Endothelial cell of umbilical vein (primary cell): ENCODE measurements at regions of chr12 and their contacts with region 1.

Region 1: GRCh38 chr12:121811434-121812319 is 7.9 kb downstream of the SETD1B start:
- DNase-seq: peak; percentile 67
- H3K4me3 ChIP-seq: peak overlapping the region in 2 of 3 experiments; percentile 49
- H3K27ac ChIP-seq: no peak overlapping the region
- H3K4me1 ChIP-seq: peaks cover 27% of the 10 kb centered on the region
- H3K27me3 ChIP-seq: no peaks in the 10 kb centered on the region
- CTCF ChIP-seq: peak; percentile 89 to 94
- POLR2A ChIP-seq: no peak

Region 2: GRCh38 chr12:121688966-121689365 is 122.7 kb before region 1 on chr12:
- CTCF ChIA-PET with region 1: interaction called, 11 read pairs
- POLR2A ChIA-PET with region 1: interaction called, 3 read pairs
- dilution Hi-C with region 1: no loop called
- intact Hi-C with region 1: no loop called
- DNase-seq: no peak
- H3K4me3 ChIP-seq: no peak overlapping the region
- H3K27ac ChIP-seq: no peak overlapping the region
- H3K4me1 ChIP-seq: no peaks in the 10 kb centered on the region
- H3K27me3 ChIP-seq: no peaks in the 10 kb centered on the region
- CTCF ChIP-seq: no peak
- POLR2A ChIP-seq: no peak

Region 3: DNA sequence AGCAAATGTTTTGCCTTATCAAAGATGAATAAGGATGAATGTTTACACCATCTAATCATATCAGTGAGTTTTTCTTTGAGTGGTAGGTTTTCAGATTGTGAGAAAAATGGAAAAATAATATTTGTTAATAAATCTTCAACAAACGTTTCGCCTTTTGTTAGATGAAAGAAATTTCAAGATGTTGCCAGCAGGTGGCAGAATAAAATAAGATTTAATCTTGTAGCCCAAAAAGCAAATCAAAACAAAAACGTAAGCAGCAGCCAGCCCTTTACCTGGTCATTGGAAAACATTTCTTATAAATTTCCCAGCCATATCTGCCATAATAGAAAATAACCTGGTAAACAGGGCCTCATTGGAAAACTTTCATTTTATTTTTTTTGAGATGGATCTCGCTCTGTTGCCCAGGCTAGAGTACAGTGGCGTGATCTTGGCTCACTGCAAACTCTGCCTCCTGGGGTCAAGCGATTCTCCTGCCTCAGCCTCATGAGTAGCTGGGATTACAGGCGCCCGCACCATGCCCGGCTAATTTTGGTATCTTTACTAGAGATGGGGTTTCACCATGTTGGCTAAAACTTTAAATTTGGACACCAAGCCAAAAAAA is 114.5 kb before region 1 on chr12:
- CTCF ChIA-PET with region 1: interaction called, 6 read pairs
- POLR2A ChIA-PET with region 1: no interaction called
- dilution Hi-C with region 1: no loop called
- intact Hi-C with region 1: loop called (anchors 1 kb)
- DNase-seq: peak; percentile 62
- H3K4me3 ChIP-seq: no peak overlapping the region
- H3K27ac ChIP-seq: no peak overlapping the region
- H3K4me1 ChIP-seq: no peaks in the 10 kb centered on the region
- H3K27me3 ChIP-seq: peaks cover under 1 to 3% of the 10 kb centered on the region in 2 experiments
- CTCF ChIP-seq: peak in 1 of 2 donors; percentile 19
- POLR2A ChIP-seq: no peak

Region 4: DNA sequence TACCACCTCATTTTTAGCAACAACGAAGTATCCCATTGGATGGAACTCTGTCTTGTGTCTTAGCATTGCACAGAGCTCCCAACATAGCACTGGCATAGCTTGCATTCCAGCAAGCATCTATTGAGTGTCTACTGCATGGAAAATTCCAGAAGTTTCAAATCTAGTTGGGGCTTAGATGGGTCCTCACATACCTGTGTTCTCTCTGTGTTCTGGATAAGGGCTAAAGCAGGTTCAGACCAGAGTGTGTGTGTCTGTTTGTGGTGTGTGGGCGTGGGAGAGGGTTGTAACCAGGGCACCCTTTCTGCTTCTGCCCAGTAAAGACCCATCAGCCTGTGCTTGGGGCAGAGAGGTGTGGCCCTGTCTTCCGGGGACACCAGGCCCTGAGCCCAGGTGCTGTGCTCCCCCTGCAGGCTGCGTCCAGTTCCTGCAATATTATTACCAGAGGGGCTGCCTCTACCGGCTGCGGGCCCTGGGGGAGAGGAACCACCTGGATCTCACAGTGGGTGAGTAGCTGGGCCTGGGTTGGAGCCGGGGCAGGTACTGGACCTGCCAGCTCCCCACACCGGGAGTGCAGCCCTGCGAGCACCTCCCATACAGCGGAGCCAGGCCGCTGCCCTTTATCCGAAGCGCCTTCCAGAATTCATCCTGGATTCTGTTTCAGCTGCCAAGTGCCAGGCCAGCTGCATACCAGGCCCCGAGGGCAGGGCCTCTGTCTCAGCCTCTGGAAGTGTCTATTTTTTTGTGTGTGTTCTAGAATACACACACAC is 38.5 kb before region 1 on chr12:
- CTCF ChIA-PET with region 1: interaction called, 28 read pairs
- POLR2A ChIA-PET with region 1: no interaction called
- dilution Hi-C with region 1: no loop called
- intact Hi-C with region 1: loop called (anchors 1 kb)
- DNase-seq: peak; percentile 40
- H3K4me3 ChIP-seq: no peak overlapping the region
- H3K27ac ChIP-seq: no peak overlapping the region
- H3K4me1 ChIP-seq: no peaks in the 10 kb centered on the region
- H3K27me3 ChIP-seq: no peaks in the 10 kb centered on the region
- CTCF ChIP-seq: peak; percentile 80
- POLR2A ChIP-seq: no peak

Region 5: GRCh38 chr12:121823101-121823726 is 11.5 kb after region 1 on chr12:
- CTCF ChIA-PET with region 1: interaction called, 16 read pairs
- POLR2A ChIA-PET with region 1: interaction called, 3 read pairs
- dilution Hi-C with region 1: no loop called
- intact Hi-C with region 1: no loop called
- DNase-seq: no peak
- H3K4me3 ChIP-seq: no peak overlapping the region
- H3K27ac ChIP-seq: no peak overlapping the region
- H3K4me1 ChIP-seq: no peaks in the 10 kb centered on the region
- H3K27me3 ChIP-seq: no peaks in the 10 kb centered on the region
- CTCF ChIP-seq: peak in 1 of 2 donors; percentile 3
- POLR2A ChIP-seq: no peak

Region 6: GRCh38 chr12:121830588-121831265 is 19.1 kb after region 1 on chr12:
- CTCF ChIA-PET with region 1: interaction called, 16 read pairs
- POLR2A ChIA-PET with region 1: interaction called, 3 read pairs
- dilution Hi-C with region 1: no loop called
- intact Hi-C with region 1: loop called (anchors 2 kb)
- DNase-seq: no peak
- H3K4me3 ChIP-seq: no peak overlapping the region
- H3K27ac ChIP-seq: no peak overlapping the region
- H3K4me1 ChIP-seq: no peaks in the 10 kb centered on the region
- H3K27me3 ChIP-seq: no peaks in the 10 kb centered on the region
- CTCF ChIP-seq: no peak
- POLR2A ChIP-seq: no peak

Region 7: GRCh38 chr12:121845701-121846100 is 34.0 kb after region 1 on chr12:
- CTCF ChIA-PET with region 1: no interaction called
- POLR2A ChIA-PET with region 1: no interaction called
- dilution Hi-C with region 1: no loop called
- intact Hi-C with region 1: no loop called
- DNase-seq: no peak
- H3K4me3 ChIP-seq: no peak overlapping the region
- H3K27ac ChIP-seq: no peak overlapping the region
- H3K4me1 ChIP-seq: no peaks in the 10 kb centered on the region
- H3K27me3 ChIP-seq: no peaks in the 10 kb centered on the region
- CTCF ChIP-seq: no peak
- POLR2A ChIP-seq: no peak

Region 8: GRCh38 chr12:121888478-121889266 is 77.0 kb after region 1 on chr12 and contains the start of gene PSMD9:
- CTCF ChIA-PET with region 1: interaction called, 8 read pairs
- POLR2A ChIA-PET with region 1: no interaction called
- dilution Hi-C with region 1: no loop called
- intact Hi-C with region 1: loop called (anchors 2 kb)
- DNase-seq: peak; percentile 96
- H3K4me3 ChIP-seq: peak within 1 kb of the TSS; percentile 25 to 90 (median 82)
- H3K27ac ChIP-seq: peak within 1 kb of the TSS; percentile 26
- H3K4me1 ChIP-seq: peaks cover 17% of the 10 kb centered on the region
- H3K27me3 ChIP-seq: no peaks in the 10 kb centered on the region
- CTCF ChIP-seq: peak; percentile 60 to 87
- POLR2A ChIP-seq: peak; percentile 96
- total RNA-seq, gene PSMD9: 64.6 and 69.2 TPM in 2 replicates

Region 9: GRCh38 chr12:122293081-122293480 is 481.4 kb after region 1 on chr12:
- CTCF ChIA-PET with region 1: no interaction called
- POLR2A ChIA-PET with region 1: no interaction called
- dilution Hi-C with region 1: no loop called
- intact Hi-C with region 1: no loop called
- DNase-seq: no peak
- H3K4me3 ChIP-seq: no peak overlapping the region
- H3K27ac ChIP-seq: no peak overlapping the region
- H3K4me1 ChIP-seq: no peaks in the 10 kb centered on the region
- H3K27me3 ChIP-seq: no peaks in the 10 kb centered on the region
- CTCF ChIP-seq: no peak
- POLR2A ChIP-seq: no peak